HCT116 (cell line): ENCODE measurements at regions of chr19 and their contacts with region 1.

Region 1: DNA sequence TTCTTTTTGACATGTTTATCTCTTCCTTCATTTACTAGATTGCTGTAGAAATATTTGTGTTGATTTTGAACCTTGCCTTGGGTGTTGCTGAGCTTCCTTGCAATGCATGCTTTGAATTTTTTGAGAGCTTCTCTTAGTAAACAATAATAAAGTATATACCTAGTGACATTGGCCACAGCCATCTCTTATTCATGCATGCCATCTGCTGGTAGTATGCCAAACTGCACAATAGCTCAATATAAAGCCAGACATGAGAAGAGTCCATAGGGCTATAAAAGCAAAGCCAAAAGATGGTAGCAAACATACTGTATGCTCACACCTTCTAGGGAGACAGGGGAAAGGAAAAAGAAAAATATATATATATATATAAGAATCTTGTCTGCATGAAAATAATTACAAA is 18.9 kb upstream of the ZSCAN5A start:
- DNase-seq: peak; percentile 48
- ATAC-seq: peak; percentile 84
- H3K4me3 ChIP-seq: no peak overlapping the region
- H3K27ac ChIP-seq: no peak overlapping the region
- H3K4me1 ChIP-seq: no peaks in the 10 kb centered on the region
- H3K27me3 ChIP-seq: peaks cover 3% of the 10 kb centered on the region; the same call in 1 of the 2 replicates
- CTCF ChIP-seq: peak; percentile 68 to 71 (median 69); a peak in 5 of 6 replicates
- POLR2A ChIP-seq: no peak
- RAD21 ChIP-seq: peak; percentile 81

Region 2: DNA sequence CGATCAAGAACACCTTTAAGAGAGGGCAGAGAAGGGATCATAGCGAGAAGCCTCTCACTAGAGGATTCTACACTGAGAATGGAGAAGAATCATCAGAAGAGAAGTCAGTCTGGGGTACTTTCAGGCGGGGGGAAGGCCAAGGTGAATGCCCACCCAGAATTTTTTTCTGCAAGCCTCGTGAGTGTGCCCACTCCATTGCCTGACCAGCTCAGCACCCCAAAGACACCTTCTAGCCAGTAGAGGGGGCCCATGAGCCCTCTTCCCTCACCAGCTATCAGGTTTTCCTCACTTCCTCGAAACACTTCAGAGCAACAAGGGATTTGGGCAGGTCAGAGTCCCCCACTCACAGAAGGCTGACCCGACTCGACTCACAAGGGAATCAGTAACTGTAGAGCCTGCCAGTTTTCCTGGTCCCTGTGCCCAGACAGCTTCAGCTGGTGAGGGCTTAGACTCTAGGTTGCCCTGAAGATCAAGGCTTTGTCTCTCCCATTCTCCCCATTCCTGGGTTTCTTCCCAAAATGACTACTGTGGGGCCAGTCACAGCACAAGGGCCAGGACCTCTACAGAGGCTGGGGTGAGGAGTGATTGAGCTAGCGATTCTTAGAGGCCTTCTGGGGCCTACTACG is 419.7 kb before region 1 on chr19:
- CTCF ChIA-PET with region 1: interaction called, 18 read pairs
- POLR2A ChIA-PET with region 1: no interaction called
- RAD21 ChIA-PET with region 1: no interaction called
- intact Hi-C with region 1: loop called (anchors 2 kb)
- DNase-seq: peak; percentile 13
- ATAC-seq: peak; percentile 92
- H3K4me3 ChIP-seq: no peak overlapping the region
- H3K27ac ChIP-seq: no peak overlapping the region
- H3K4me1 ChIP-seq: no peaks in the 10 kb centered on the region
- H3K27me3 ChIP-seq: peaks cover 30% of the 10 kb centered on the region
- CTCF ChIP-seq: peak; percentile 38 to 85 (median 63); a peak in 5 of 6 replicates
- POLR2A ChIP-seq: no peak
- RAD21 ChIP-seq: peak; percentile 44; the same call in 1 of the 2 replicates

Region 3: GRCh38 chr19:56066152-56067023 is 267.1 kb before region 1 on chr19:
- CTCF ChIA-PET with region 1: interaction called, 55 read pairs
- POLR2A ChIA-PET with region 1: no interaction called
- RAD21 ChIA-PET with region 1: interaction called, 7 to 8 read pairs
- intact Hi-C with region 1: loop called (anchors 1 kb)
- DNase-seq: peak; percentile 44
- ATAC-seq: peak; percentile 96
- H3K4me3 ChIP-seq: peak overlapping the region; percentile 30 to 46
- H3K27ac ChIP-seq: no peak overlapping the region
- H3K4me1 ChIP-seq: peaks cover 6 to 10% of the 10 kb centered on the region in 2 experiments
- H3K27me3 ChIP-seq: peaks cover 11% of the 10 kb centered on the region; the same call in 1 of the 2 replicates
- CTCF ChIP-seq: peak; percentile 70 to 91 (median 88)
- POLR2A ChIP-seq: no peak
- RAD21 ChIP-seq: peak; percentile 74

Region 4: DNA sequence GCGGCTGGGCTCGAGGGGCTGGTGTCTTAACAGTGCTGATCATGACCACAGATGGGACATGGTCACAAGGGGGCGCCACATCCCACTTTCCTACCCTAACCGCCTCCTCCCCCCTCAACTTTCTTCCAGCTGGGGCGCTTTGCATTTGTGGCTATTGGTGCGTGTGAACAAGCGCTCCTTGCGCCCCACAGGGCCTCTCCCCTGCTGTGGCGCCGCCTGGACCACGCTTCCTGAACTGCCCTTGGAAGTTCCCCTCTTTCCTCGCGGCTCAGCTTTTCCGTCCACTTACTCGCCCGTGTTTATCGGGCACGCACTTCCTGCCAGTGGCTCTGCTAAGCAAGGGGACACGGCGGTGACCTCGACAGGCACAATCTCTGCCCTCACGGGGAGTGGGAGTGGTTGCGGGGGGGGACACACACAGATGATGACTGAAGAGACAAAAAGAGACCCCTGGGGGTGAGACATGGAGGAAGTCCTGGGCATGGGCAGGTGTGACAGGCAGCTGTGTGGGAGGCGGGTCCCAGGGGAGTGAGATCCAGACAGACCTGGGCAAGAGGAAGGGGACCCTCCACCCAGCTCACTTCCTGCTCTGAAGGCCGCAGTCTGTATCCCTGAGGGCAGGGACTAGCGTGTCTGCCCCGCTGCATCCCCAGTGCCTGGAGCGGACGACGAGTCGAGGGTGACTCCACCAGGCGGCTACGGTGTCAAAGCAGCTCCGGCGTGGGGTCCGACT is 252.7 kb before region 1 on chr19:
- CTCF ChIA-PET with region 1: interaction called, 34 read pairs
- POLR2A ChIA-PET with region 1: no interaction called
- RAD21 ChIA-PET with region 1: interaction called, 3 read pairs
- intact Hi-C with region 1: no loop called
- DNase-seq: peak; percentile 39
- ATAC-seq: peak; percentile 82
- H3K4me3 ChIP-seq: no peak overlapping the region
- H3K27ac ChIP-seq: no peak overlapping the region
- H3K4me1 ChIP-seq: peaks cover 6 to 7% of the 10 kb centered on the region in 2 experiments; a peak in 3 of 4 replicates
- H3K27me3 ChIP-seq: no peaks in the 10 kb centered on the region
- CTCF ChIP-seq: peak; percentile 44 to 53 (median 53); a peak in 5 of 6 replicates
- POLR2A ChIP-seq: no peak
- RAD21 ChIP-seq: peak; percentile 61

Region 5: DNA sequence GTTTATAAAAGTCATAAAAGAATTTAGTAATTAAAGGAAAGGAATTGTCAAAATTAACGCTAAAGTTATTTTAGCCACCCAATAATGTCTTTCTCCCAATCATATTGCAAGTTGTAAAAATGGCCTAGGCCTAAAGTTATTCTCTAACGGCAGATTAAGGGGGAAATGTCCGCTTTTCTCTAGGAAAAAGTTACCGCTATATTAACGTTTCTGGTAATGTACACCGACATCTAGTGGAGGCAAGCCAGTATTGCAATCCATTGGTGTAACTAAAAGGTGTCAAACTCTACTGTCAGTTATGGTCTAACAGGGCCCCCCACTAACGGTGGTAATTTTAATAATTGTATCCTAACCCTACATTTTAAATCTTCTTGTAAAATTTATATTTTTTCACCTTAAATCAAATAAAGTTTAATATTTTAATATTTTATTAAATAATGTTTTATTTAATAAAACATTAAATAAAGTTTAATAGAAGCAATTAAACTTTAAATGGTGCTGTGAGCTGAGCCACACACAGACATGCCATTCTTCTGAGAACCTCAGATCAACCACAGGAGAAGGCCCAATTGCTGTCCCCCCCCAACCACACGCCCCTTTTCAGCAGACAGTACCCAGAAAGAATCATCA is 17.0 kb after region 1 on chr19:
- CTCF ChIA-PET with region 1: interaction called, 18 read pairs
- POLR2A ChIA-PET with region 1: no interaction called
- RAD21 ChIA-PET with region 1: no interaction called
- intact Hi-C with region 1: no loop called
- DNase-seq: peak; percentile 24
- ATAC-seq: peak; percentile 67
- H3K4me3 ChIP-seq: no peak overlapping the region
- H3K27ac ChIP-seq: no peak overlapping the region
- H3K4me1 ChIP-seq: no peaks in the 10 kb centered on the region
- H3K27me3 ChIP-seq: no peaks in the 10 kb centered on the region
- CTCF ChIP-seq: peak; percentile 33 to 88 (median 76); a peak in 5 of 6 replicates
- POLR2A ChIP-seq: no peak
- RAD21 ChIP-seq: peak; percentile 57